GM13976 (cell line): ENCODE measurements at regions of chr20 and their contacts with region 1.

Region 1: DNA sequence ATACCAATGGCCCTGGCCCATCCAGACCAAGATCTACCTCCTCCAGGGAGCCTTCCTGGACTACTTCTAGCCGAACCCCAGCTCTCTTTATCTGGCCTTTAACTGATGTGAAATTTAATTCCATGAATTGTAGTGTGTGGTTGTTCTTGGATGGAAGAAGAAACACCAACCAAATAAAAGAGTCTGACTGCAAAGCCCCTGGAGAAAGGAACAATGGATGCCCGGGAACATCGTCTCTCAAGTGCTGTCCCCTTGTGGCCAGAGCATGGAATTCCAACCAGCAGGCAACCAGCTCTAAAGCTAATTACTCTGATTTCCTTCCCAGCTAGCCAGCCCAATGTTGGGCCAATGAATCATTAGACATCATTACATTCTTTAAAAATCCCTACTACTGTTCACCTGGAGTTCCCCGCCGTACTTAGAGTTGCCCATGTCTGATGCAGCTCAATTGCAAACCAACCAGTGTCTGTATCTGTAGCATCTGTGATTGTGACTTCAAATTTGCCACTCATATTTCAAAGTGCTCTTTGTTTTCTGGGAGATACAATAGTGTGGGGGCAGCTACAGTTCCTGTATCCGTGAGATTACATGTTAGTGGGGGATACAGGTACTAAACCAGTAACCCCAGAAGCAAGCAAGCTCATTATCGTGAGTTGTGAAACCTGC is 141.1 kb downstream of the ANKRD60 start:
- DNase-seq: peak; percentile 58
- CTCF ChIP-seq: peak; percentile 48

Region 2: GRCh38 chr20:57654363-57654997 is 432.8 kb before region 1 on chr20:
- in situ Hi-C with region 1: loop called (anchors 25 kb)
- DNase-seq: peak; percentile 92
- CTCF ChIP-seq: peak; percentile 84